Caco-2 (cell line): ENCODE measurements at regions of chr17 and their contacts with region 1.

Region 1: GRCh38 chr17:32877164-32877764 is 340 bp upstream of the MYO1D start:
- DNase-seq: peak; percentile 91 to 98
- H3K4me3 ChIP-seq: peak overlapping the region; percentile 94
- H3K4me3 Mint-ChIP-seq: peak overlapping the region; percentile 94
- H3K27ac Mint-ChIP-seq: peak overlapping the region; percentile 68
- H3K4me1 ChIP-seq: peaks cover 22% of the 10 kb centered on the region
- H3K4me1 Mint-ChIP-seq: peaks cover 23% of the 10 kb centered on the region
- H3K27me3 ChIP-seq: no peaks in the 10 kb centered on the region
- H3K27me3 Mint-ChIP-seq: no peaks in the 10 kb centered on the region
- CTCF ChIP-seq: peak; percentile 97

Region 2: GRCh38 chr17:32777436-32777835 is 99.8 kb before region 1 on chr17:
- CTCF ChIA-PET with region 1: interaction called, 80 read pairs
- POLR2A ChIA-PET with region 1: no interaction called
- intact Hi-C with region 1: no loop called
- DNase-seq: no peak
- H3K4me3 ChIP-seq: no peak overlapping the region
- H3K4me3 Mint-ChIP-seq: no peak overlapping the region
- H3K27ac Mint-ChIP-seq: no peak overlapping the region
- H3K4me1 ChIP-seq: peaks cover 6% of the 10 kb centered on the region; the same call in 1 of the 2 replicates
- H3K4me1 Mint-ChIP-seq: peaks cover 14% of the 10 kb centered on the region
- H3K27me3 ChIP-seq: no peaks in the 10 kb centered on the region
- H3K27me3 Mint-ChIP-seq: no peaks in the 10 kb centered on the region
- CTCF ChIP-seq: no peak

Region 3: GRCh38 chr17:32801193-32801592 is 76.1 kb before region 1 on chr17:
- CTCF ChIA-PET with region 1: interaction called, 11 read pairs
- POLR2A ChIA-PET with region 1: interaction called, 3 read pairs
- intact Hi-C with region 1: no loop called
- DNase-seq: no peak
- H3K4me3 ChIP-seq: no peak overlapping the region
- H3K4me3 Mint-ChIP-seq: no peak overlapping the region
- H3K27ac Mint-ChIP-seq: no peak overlapping the region
- H3K4me1 ChIP-seq: peaks cover 21% of the 10 kb centered on the region
- H3K4me1 Mint-ChIP-seq: peaks cover 19% of the 10 kb centered on the region
- H3K27me3 ChIP-seq: no peaks in the 10 kb centered on the region
- H3K27me3 Mint-ChIP-seq: no peaks in the 10 kb centered on the region
- CTCF ChIP-seq: no peak

Region 4: DNA sequence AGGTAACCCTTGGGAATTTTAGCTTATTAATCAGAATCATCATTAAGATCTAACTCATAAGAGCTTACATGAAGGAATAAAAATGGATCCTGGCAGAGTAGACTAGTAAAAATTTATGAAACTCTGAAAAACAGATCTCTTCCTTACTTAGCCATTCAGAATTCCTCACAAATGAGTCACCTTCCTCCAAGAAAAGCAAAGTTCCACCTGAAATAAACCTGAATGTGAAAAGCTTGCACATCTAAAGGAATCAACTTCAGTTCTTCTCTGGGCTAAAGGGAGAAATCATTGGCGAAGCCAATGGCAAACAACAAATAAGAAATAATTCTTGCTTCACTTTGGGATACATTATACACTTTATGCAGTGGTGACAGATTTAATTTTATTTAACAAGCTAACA is 23.1 kb before region 1 on chr17:
- CTCF ChIA-PET with region 1: interaction called, 17 read pairs
- POLR2A ChIA-PET with region 1: no interaction called
- intact Hi-C with region 1: no loop called
- DNase-seq: no peak
- H3K4me3 ChIP-seq: no peak overlapping the region
- H3K4me3 Mint-ChIP-seq: no peak overlapping the region
- H3K27ac Mint-ChIP-seq: no peak overlapping the region
- H3K4me1 ChIP-seq: peaks cover 65% of the 10 kb centered on the region
- H3K4me1 Mint-ChIP-seq: peaks cover 25% of the 10 kb centered on the region
- H3K27me3 ChIP-seq: no peaks in the 10 kb centered on the region
- H3K27me3 Mint-ChIP-seq: no peaks in the 10 kb centered on the region
- CTCF ChIP-seq: no peak

Region 5: GRCh38 chr17:32909787-32910369 is 32.6 kb after region 1 on chr17:
- CTCF ChIA-PET with region 1: interaction called, 55 read pairs
- POLR2A ChIA-PET with region 1: interaction called, 5 read pairs
- intact Hi-C with region 1: loop called (anchors 1 kb)
- DNase-seq: peak; percentile 88 to 90
- H3K4me3 ChIP-seq: no peak overlapping the region
- H3K4me3 Mint-ChIP-seq: no peak overlapping the region
- H3K27ac Mint-ChIP-seq: no peak overlapping the region
- H3K4me1 ChIP-seq: peaks cover 37% of the 10 kb centered on the region
- H3K4me1 Mint-ChIP-seq: peaks cover 19% of the 10 kb centered on the region
- H3K27me3 ChIP-seq: no peaks in the 10 kb centered on the region
- H3K27me3 Mint-ChIP-seq: no peaks in the 10 kb centered on the region
- CTCF ChIP-seq: peak; percentile 84

Region 6: DNA sequence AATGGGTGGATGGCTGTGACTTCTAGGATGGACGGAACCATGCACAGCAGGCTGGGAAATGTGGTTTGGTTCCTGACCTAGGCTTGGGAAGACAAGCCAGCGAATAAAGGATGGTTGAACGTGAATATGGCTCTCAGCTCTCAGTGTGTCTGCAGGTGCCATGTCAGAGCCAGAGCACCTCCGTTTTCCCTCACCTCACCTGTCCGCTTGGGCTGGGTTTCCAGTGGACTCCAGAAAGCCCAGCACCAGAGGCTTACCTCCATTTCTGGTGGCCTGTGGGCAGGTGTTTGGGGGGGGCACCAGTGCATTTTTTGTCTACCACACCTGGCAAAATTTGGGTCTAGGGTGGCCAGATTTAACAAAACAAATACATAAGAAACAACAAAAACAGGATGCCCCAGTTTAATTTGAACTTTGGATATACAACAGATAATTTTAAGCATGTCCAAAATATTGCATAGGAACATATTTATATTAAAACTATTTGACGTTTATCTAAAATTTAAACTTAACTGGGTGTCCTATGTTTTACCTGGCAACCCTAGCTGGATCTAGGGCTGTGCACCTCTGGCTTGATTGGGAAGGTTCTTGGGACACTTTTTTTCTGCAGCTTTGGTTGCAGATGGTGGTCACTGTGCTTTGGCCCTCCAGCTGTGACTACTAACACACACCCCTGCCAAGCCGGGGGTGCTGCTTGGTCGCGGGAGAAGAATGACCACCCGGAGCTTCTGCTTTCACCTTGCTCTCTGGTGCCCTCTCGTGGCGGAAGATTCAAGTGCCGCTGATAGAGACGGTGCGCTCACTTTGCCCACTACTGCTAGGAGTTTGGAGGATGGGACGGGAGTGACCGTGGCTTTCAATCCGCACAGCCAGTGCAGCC is 120.7 kb after region 1 on chr17:
- CTCF ChIA-PET with region 1: interaction called, 13 read pairs
- POLR2A ChIA-PET with region 1: no interaction called
- intact Hi-C with region 1: loop called (anchors 1 kb)
- DNase-seq: peak; percentile 87 to 92
- H3K4me3 ChIP-seq: peak overlapping the region; percentile 6
- H3K4me3 Mint-ChIP-seq: peak overlapping the region; percentile 82
- H3K27ac Mint-ChIP-seq: peak overlapping the region; percentile 92
- H3K4me1 ChIP-seq: peaks cover 12% of the 10 kb centered on the region
- H3K4me1 Mint-ChIP-seq: peaks cover 23% of the 10 kb centered on the region
- H3K27me3 ChIP-seq: no peaks in the 10 kb centered on the region
- H3K27me3 Mint-ChIP-seq: no peaks in the 10 kb centered on the region
- CTCF ChIP-seq: peak; percentile 93 to 94